ENCODE measurements at regions of chr14 and their contacts with region 1.

Region 1: DNA sequence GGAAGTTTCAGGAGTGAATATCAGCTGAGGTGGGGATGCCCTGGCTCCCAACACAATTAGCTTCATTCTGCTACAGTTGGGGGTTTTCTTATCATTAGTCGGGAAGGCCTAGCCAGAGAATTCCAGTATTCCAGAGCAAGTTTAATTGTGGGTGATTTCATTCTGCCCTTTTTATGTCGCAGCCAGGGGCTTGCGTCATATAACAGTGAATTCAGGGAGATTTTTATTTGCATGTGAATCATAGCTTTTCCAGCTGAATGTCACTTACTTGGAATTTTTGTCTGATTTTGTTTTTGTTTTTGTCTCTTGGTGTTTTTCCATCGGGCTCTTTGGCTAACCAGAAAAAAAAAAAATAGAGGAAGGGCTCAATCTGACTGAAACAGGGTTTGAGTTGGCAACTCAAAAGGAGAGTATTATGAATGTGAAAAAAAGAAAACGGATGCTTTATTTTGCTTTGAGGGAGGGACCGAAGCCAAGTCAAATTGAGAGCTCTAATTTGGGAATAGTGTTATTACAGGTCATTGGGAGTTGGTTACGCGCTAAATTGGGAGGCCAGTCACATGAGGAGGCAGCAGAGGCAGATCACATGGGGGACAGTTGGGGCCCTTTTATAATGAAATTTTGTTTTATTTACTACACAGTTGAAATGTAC is 119.4 kb downstream of the SAMD4A start:
- DNase-seq: peak in 1 of 2 donors; percentile 82
- ATAC-seq: peak; percentile 56 to 84 (median 76)
- H3K4me3 ChIP-seq: peak overlapping the region in 5 of 10 donors; percentile 0 to 23 (median 16)
- H3K27ac ChIP-seq: peak overlapping the region; percentile 63 to 96 (median 88)
- H3K4me1 ChIP-seq: peaks cover 18 to 94% (median 78%) of the 10 kb centered on the region in 9 donors
- H3K27me3 ChIP-seq: no peaks in the 10 kb centered on the region
- CTCF ChIP-seq: no peak

Region 2: GRCh38 chr14:54652188-54652587 is 34.2 kb before region 1 on chr14:
- intact Hi-C with region 1: loop called in 3 of 10 experiments (anchors 5 kb)
- DNase-seq: peak; percentile 72 to 91
- ATAC-seq: peak; percentile 74 to 92 (median 92)
- H3K4me3 ChIP-seq: peak overlapping the region in 7 of 10 donors; percentile 19 to 46 (median 31)
- H3K27ac ChIP-seq: peak overlapping the region; percentile 65 to 91 (median 84)
- H3K4me1 ChIP-seq: peaks cover 18 to 93% (median 75%) of the 10 kb centered on the region in 9 donors
- H3K27me3 ChIP-seq: no peaks in the 10 kb centered on the region
- CTCF ChIP-seq: no peak